GM12878 (cell line): ENCODE measurements at regions of chr13 and their contacts with region 1.

Region 1: DNA sequence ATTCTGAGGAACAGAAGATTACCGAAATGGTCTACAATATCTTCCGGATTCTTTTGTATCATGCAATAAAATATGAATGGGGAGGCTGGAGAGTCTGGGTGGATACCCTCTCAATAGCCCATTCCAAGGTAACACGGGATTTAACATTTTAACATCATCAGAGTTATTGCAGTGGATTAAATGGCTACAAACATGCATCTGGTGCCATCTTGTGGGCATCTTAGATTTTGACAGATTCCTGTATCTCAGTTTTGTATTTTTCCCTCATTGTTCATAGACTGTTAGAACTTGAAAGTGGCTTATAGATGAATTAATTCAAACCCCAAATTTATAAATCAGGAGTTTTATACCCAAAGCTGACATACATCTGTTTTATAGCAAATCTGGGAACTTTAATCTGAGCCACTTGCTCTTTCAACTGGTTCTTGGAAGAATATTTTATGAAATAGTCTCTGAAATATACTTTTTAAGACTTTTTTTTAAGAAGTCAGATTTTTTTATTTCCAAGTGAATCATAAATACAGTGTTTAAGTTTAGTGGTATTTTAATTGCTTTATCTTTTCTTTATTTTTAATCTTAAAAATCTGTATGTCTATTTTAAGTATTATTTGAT is 215.2 kb downstream of the NBEA start:
- DNase-seq: peak; percentile 33
- ATAC-seq: peak; percentile 79
- H3K4me3 ChIP-seq: no peak overlapping the region
- H3K27ac ChIP-seq: no peak overlapping the region
- H3K4me1 ChIP-seq: no peaks in the 10 kb centered on the region
- H3K27me3 ChIP-seq: no peaks in the 10 kb centered on the region
- CTCF ChIP-seq: peak; percentile 53 to 70 (median 65); a peak in 5 of 6 replicates
- EP300 ChIP-seq: no peak
- POLR2A ChIP-seq: no peak
- RAD21 ChIP-seq: peak; percentile 88

Region 2: GRCh38 chr13:33817901-33818706 is 1339.1 kb before region 1 on chr13 and contains the start of gene RFC3:
- CTCF ChIA-PET with region 1: no interaction called
- POLR2A ChIA-PET with region 1: no interaction called
- RAD21 ChIA-PET with region 1: no interaction called
- SMC1A ChIA-PET with region 1: no interaction called
- in situ Hi-C with region 1: loop called (anchors 25 kb)
- intact Hi-C with region 1: no loop called
- DNase-seq: peak; percentile 69
- ATAC-seq: peak; percentile 95
- H3K4me3 ChIP-seq: peak within 1 kb of the TSS; percentile 96
- H3K27ac ChIP-seq: peak within 1 kb of the TSS; percentile 77
- H3K4me1 ChIP-seq: no peaks in the 10 kb centered on the region
- H3K27me3 ChIP-seq: no peaks in the 10 kb centered on the region
- CTCF ChIP-seq: no peak
- EP300 ChIP-seq: 0 out of 4 replicates have a peak, but pooled peaks of 1 of the 2 experiments have one; percentile 64
- POLR2A ChIP-seq: peak; percentile 89
- RAD21 ChIP-seq: 0 out of 2 replicates have a peak, but pooled peaks have one; percentile 3
- polyA plus RNA-seq, gene RFC3: 88.9 to 95.9 TPM

Region 3: DNA sequence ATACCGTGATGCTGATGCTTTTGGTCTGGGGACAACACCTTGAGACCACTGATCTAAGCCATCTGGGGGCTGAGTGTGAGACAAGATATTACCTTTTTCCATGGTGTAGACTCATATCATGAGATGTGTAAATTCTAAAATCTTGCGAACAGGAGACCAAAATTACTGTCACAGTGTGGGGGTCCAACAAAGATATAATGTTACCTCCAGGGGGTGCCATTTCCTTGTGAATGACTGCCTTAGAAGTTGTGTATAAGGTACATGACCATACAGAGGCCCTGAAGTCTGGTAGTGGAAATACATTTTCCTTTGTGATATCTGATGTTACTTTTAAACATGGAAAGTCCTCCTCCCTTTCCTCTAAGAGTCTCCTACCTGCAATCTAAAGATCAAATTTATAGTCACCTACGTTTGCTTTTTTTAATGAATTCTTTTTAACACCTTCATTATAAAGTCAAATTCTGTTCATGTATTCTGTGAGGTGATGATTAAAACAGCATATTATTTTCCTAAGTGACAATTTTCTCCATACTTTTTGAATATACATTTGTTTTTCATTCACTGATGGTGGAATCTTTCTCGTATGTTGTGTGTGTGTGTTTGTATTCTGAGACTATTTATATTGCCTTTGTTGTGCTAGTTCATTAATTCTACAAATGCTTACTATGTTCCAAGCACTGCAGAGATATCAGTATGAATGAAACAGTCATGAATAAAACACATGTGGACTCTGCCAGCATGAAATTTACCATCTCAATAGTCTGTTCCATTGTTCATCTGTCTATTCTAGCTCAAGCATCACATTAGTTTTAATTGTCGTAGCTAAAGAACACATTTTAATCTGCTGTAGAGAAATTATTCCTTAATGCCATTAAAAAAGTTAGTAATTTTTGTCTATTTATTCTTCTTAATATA is 1225.6 kb before region 1 on chr13:
- CTCF ChIA-PET with region 1: interaction called, 10 read pairs
- POLR2A ChIA-PET with region 1: no interaction called
- RAD21 ChIA-PET with region 1: interaction called, 7 read pairs
- SMC1A ChIA-PET with region 1: interaction called, 10 read pairs
- in situ Hi-C with region 1: loop called (anchors 5 kb)
- intact Hi-C with region 1: loop called (anchors 2 kb)
- DNase-seq: peak; percentile 4
- ATAC-seq: peak; percentile 93
- H3K4me3 ChIP-seq: no peak overlapping the region
- H3K27ac ChIP-seq: no peak overlapping the region
- H3K4me1 ChIP-seq: 0 out of 2 replicates have a peak, but pooled peaks cover 3% of the 10 kb centered on the region
- H3K27me3 ChIP-seq: no peaks in the 10 kb centered on the region
- CTCF ChIP-seq: peak; percentile 44 to 61 (median 44); a peak in 5 of 6 replicates
- EP300 ChIP-seq: no peak
- POLR2A ChIP-seq: no peak
- RAD21 ChIP-seq: peak; percentile 93

Region 4: DNA sequence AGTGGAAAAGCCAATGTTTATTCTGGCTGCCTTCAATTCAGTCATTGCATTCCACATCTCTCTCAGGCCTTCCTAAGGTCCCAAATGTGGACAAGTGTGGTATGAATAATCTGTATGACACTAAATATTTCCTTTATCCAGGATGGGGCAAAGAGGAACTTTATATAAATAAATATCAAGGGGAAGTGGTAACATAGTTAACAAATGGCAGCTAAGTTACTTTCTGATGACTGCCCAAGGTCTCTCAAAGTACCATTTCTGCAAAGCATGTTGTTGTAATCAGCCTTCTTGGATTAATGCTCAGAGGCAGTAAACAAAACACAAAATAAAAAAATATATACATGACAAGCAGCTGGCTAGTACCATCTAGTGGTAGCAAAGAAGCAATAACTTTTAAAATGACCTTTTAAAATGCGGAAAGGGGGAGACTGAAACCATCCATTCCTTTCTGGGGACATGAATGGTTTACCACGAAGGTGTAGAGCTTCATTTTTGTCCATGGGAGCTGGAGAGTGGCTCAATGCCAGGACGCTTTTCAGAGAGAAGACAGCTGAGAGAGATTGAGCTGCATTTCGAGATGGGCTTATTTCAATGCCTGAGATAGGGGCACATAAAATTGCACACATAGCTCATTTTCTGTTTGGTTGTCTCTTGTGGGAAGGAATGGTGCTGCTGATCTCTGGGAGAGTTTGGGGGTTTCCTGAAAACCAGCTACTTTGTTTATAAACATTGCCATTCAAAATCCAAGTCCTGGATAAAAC is 1080.1 kb before region 1 on chr13:
- CTCF ChIA-PET with region 1: interaction called, 3 read pairs
- POLR2A ChIA-PET with region 1: no interaction called
- RAD21 ChIA-PET with region 1: interaction called, 6 read pairs
- SMC1A ChIA-PET with region 1: interaction called, 11 read pairs
- in situ Hi-C with region 1: loop called (anchors 10 kb)
- intact Hi-C with region 1: loop called (anchors 5 kb)
- DNase-seq: no peak
- ATAC-seq: peak; percentile 62
- H3K4me3 ChIP-seq: no peak overlapping the region
- H3K27ac ChIP-seq: no peak overlapping the region
- H3K4me1 ChIP-seq: no peaks in the 10 kb centered on the region
- H3K27me3 ChIP-seq: no peaks in the 10 kb centered on the region
- CTCF ChIP-seq: peak; percentile 42 to 56 (median 51); a peak in 5 of 6 replicates
- EP300 ChIP-seq: no peak
- POLR2A ChIP-seq: no peak
- RAD21 ChIP-seq: peak; percentile 89

Region 5: GRCh38 chr13:34086281-34086680 is 1071.0 kb before region 1 on chr13:
- CTCF ChIA-PET with region 1: no interaction called
- POLR2A ChIA-PET with region 1: no interaction called
- RAD21 ChIA-PET with region 1: no interaction called
- SMC1A ChIA-PET with region 1: no interaction called
- in situ Hi-C with region 1: loop called (anchors 10 kb)
- intact Hi-C with region 1: no loop called
- DNase-seq: peak; percentile 31
- ATAC-seq: peak; percentile 59
- H3K4me3 ChIP-seq: no peak overlapping the region
- H3K27ac ChIP-seq: no peak overlapping the region
- H3K4me1 ChIP-seq: no peaks in the 10 kb centered on the region
- H3K27me3 ChIP-seq: no peaks in the 10 kb centered on the region
- CTCF ChIP-seq: no peak
- EP300 ChIP-seq: no peak
- POLR2A ChIP-seq: no peak
- RAD21 ChIP-seq: no peak

Region 6: DNA sequence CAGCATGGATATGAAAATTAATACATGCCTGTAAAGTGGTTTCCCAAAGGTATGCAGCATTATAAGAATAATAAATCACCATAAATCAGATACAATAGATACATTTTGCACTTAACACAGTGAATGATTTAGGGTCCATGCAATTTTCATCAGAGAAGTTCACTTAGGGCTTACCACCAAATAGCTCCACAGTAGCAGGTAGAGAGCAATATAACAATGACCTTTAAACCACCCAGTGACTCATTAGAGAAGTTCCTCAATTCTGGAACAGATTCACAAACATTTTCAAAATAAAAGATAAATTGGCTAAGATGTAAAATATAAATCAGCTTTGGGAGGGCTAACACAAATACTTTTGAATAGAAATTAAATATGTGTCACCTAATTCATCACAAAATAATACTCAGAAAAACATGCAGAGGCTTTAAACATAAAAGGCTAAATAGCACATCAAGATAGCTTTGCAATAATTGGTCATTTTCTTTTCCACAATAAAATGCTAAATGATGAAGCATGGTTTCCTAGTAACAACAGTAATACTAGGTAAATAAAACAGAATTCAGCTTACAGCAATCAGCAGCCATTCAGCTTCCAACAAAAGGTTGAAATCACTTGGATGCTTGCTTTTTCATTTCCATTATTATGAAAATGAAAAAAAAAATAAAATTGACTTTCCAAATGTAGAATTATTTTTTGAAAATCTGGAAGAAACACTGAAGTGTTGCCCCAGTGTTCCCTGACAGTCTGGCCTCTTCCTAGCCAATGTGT is 299.5 kb before region 1 on chr13:
- CTCF ChIA-PET with region 1: no interaction called
- POLR2A ChIA-PET with region 1: no interaction called
- RAD21 ChIA-PET with region 1: no interaction called
- SMC1A ChIA-PET with region 1: no interaction called
- in situ Hi-C with region 1: no loop called
- intact Hi-C with region 1: loop called (anchors 10 kb)
- DNase-seq: no peak
- ATAC-seq: no peak
- H3K4me3 ChIP-seq: no peak overlapping the region
- H3K27ac ChIP-seq: no peak overlapping the region
- H3K4me1 ChIP-seq: no peaks in the 10 kb centered on the region
- H3K27me3 ChIP-seq: no peaks in the 10 kb centered on the region
- CTCF ChIP-seq: no peak
- EP300 ChIP-seq: no peak
- POLR2A ChIP-seq: no peak
- RAD21 ChIP-seq: no peak

Region 7: GRCh38 chr13:35198613-35199200 is 41.5 kb after region 1 on chr13:
- CTCF ChIA-PET with region 1: no interaction called
- POLR2A ChIA-PET with region 1: no interaction called
- RAD21 ChIA-PET with region 1: no interaction called
- SMC1A ChIA-PET with region 1: no interaction called
- in situ Hi-C with region 1: no loop called
- intact Hi-C with region 1: no loop called
- DNase-seq: no peak
- ATAC-seq: no peak
- H3K4me3 ChIP-seq: no peak overlapping the region
- H3K27ac ChIP-seq: no peak overlapping the region
- H3K4me1 ChIP-seq: no peaks in the 10 kb centered on the region
- H3K27me3 ChIP-seq: no peaks in the 10 kb centered on the region
- CTCF ChIP-seq: no peak
- EP300 ChIP-seq: no peak
- POLR2A ChIP-seq: no peak
- RAD21 ChIP-seq: no peak